A549 (cell line): ENCODE measurements at regions of chr10 and their contacts with region 1.

Region 1: GRCh38 chr10:47311932-47312662 is 10.2 kb upstream of the GDF2 start:
- DNase-seq: peak; percentile 76 to 86
- ATAC-seq: peak; percentile 89 to 97
- H3K4me3 ChIP-seq: no peak overlapping the region
- H3K27ac ChIP-seq: no peak overlapping the region
- H3K4me1 ChIP-seq: no peaks in the 10 kb centered on the region
- CTCF ChIP-seq: peak; percentile 85
- EP300 ChIP-seq: no peak
- POLR2A ChIP-seq: no peak
- RAD21 ChIP-seq: peak; percentile 95

Region 2: DNA sequence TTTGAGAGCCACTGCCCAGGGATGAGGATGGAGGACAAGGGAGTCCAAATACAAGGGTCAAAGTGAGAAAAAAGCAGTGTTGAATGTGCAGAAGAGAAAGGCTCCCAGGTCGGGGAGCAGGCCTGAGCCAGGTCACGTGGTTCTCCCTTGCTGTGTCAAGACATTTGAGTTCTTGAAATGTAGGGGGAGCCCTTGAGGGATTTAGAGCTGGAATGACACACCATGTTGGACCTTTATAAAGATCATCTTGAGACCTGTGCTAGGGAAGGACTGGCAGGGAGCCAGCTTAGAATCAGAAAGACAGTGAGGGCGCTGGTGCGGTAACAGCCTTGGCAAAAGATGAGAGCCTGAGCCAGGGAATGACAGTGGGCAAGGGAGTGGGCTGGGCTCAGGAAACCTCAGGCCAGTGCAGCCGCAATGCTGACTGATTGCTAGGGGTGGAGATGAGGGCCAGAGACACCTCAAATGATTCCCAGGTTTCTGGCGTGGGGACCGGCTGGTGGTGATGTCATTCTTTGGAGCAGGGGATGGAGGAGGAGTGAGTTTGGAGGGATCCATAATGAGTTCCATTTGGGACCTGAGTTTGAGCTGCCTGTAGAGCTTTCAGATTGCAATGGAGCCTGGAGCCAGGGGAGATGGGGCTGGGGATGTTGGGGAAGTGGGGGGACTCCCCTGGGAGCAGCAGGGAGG is 280.7 kb before region 1 on chr10:
- CTCF ChIA-PET with region 1: interaction called, 131 read pairs
- POLR2A ChIA-PET with region 1: no interaction called
- DNase-seq: peak; percentile 29 to 44
- ATAC-seq: peak in 1 of 2 experiments; percentile 60; a peak in 3 of 6 replicates
- H3K4me3 ChIP-seq: no peak overlapping the region
- H3K27ac ChIP-seq: no peak overlapping the region
- H3K4me1 ChIP-seq: no peaks in the 10 kb centered on the region
- CTCF ChIP-seq: no peak
- EP300 ChIP-seq: no peak
- POLR2A ChIP-seq: no peak
- RAD21 ChIP-seq: no peak

Region 3: GRCh38 chr10:47062466-47063200 is 249.5 kb before region 1 on chr10:
- CTCF ChIA-PET with region 1: interaction called, 11 read pairs
- POLR2A ChIA-PET with region 1: no interaction called
- DNase-seq: no peak
- ATAC-seq: peak in 1 of 2 experiments; percentile 73; a peak in 3 of 6 replicates
- H3K4me3 ChIP-seq: no peak overlapping the region
- H3K27ac ChIP-seq: no peak overlapping the region
- H3K4me1 ChIP-seq: no peaks in the 10 kb centered on the region
- CTCF ChIP-seq: no peak
- EP300 ChIP-seq: no peak
- POLR2A ChIP-seq: no peak
- RAD21 ChIP-seq: peak; percentile 11 to 22; a peak in 1 of 5 replicates

Region 4: GRCh38 chr10:47098964-47099363 is 213.1 kb before region 1 on chr10:
- CTCF ChIA-PET with region 1: no interaction called
- POLR2A ChIA-PET with region 1: no interaction called
- DNase-seq: no peak
- ATAC-seq: no peak
- H3K4me3 ChIP-seq: no peak overlapping the region
- H3K27ac ChIP-seq: no peak overlapping the region
- H3K4me1 ChIP-seq: no peaks in the 10 kb centered on the region
- CTCF ChIP-seq: no peak
- EP300 ChIP-seq: no peak
- POLR2A ChIP-seq: no peak
- RAD21 ChIP-seq: no peak

Region 5: GRCh38 chr10:47237316-47238260 is 74.5 kb before region 1 on chr10:
- CTCF ChIA-PET with region 1: no interaction called
- POLR2A ChIA-PET with region 1: no interaction called
- DNase-seq: no peak
- ATAC-seq: no peak
- H3K4me3 ChIP-seq: no peak overlapping the region
- H3K27ac ChIP-seq: no peak overlapping the region
- H3K4me1 ChIP-seq: no peaks in the 10 kb centered on the region
- CTCF ChIP-seq: no peak
- EP300 ChIP-seq: no peak
- POLR2A ChIP-seq: no peak
- RAD21 ChIP-seq: no peak

Region 6: GRCh38 chr10:47326306-47326926 is 14.3 kb after region 1 on chr10:
- CTCF ChIA-PET with region 1: interaction called, 68 read pairs
- POLR2A ChIA-PET with region 1: no interaction called
- DNase-seq: no peak
- ATAC-seq: no peak
- H3K4me3 ChIP-seq: no peak overlapping the region
- H3K27ac ChIP-seq: no peak overlapping the region
- H3K4me1 ChIP-seq: peaks cover 6% of the 10 kb centered on the region; the same call in 1 of the 3 replicates
- CTCF ChIP-seq: no peak
- EP300 ChIP-seq: no peak
- POLR2A ChIP-seq: no peak
- RAD21 ChIP-seq: no peak

Region 7: GRCh38 chr10:47440207-47440606 is 128.1 kb after region 1 on chr10:
- CTCF ChIA-PET with region 1: no interaction called
- POLR2A ChIA-PET with region 1: no interaction called
- DNase-seq: no peak
- ATAC-seq: no peak
- H3K4me3 ChIP-seq: no peak overlapping the region
- H3K27ac ChIP-seq: no peak overlapping the region
- H3K4me1 ChIP-seq: 0 out of 3 replicates have a peak, but pooled peaks cover 2% of the 10 kb centered on the region
- CTCF ChIP-seq: no peak
- EP300 ChIP-seq: no peak
- POLR2A ChIP-seq: no peak
- RAD21 ChIP-seq: peak in 1 of 2 experiments; percentile 35; a peak in 2 of 5 replicates